Ascending aorta (tissue), 2 donors: ENCODE measurements at regions of chr5 and their contacts with region 1.

Region 1: GRCh38 chr5:180810210-180810958 is 7.8 kb upstream of the MGAT1 start:
- DNase-seq: peak; percentile 79 to 96
- H3K4me3 ChIP-seq: peak overlapping the region; percentile 70 to 76
- H3K27ac ChIP-seq: peak overlapping the region; percentile 93 to 97
- H3K4me1 ChIP-seq: peaks cover 14 to 40% of the 10 kb centered on the region in 2 donors
- H3K27me3 ChIP-seq: no peaks in the 10 kb centered on the region
- CTCF ChIP-seq: no peak

Region 2: DNA sequence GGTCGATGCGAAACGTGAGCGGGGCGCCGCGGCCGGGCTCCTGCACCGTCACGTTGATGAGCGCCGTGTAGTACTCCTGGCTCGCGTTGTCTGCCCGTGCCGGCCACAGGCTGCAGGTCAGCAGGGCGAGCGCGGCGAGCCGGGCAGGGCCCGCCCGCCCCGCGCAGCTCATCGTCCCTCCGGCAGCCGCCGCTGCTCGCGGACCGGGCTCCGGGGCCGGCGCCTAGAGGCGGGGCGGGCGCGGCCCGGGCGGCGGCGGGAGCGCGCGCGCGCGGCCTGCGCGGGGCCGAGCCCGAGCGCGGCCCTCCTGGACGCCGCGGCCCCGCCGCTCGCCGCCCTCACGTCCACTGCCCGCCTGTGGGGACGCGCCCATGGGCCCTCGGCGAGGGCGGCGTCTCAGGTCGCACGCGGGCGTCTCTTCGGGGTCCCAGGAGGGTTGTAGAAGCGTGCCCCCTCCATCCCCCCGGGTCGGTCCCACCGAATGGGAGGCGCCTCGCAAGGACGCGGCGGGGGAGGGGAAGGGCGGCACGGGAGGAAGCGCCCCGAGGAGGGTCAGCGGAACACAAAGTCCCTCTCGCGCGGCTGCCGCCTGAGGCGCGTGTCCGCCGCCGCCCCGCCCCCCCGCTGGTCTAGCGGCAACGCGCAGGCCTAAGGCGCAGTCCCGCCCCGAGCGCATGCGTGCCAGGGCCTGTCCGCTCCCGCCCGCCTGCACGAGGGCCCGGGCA is 738.7 kb before region 1 on chr5 and contains the start of gene RNF130:
- intact Hi-C with region 1: loop called (anchors 5 kb)
- DNase-seq: peak; percentile 72 to 95
- H3K4me3 ChIP-seq: peak within 1 kb of the TSS; percentile 74 to 94
- H3K27ac ChIP-seq: peak within 1 kb of the TSS; percentile 94 to 98
- H3K4me1 ChIP-seq: peaks cover 0 to 10% of the 10 kb centered on the region in 2 donors
- H3K27me3 ChIP-seq: no peaks in the 10 kb centered on the region
- CTCF ChIP-seq: no peak
- total RNA-seq, gene RNF130: 86.7 TPM

Region 3: GRCh38 chr5:180353048-180353979 is 457.1 kb before region 1 on chr5 and contains the start of gene GFPT2:
- intact Hi-C with region 1: loop called (anchors 10 kb)
- DNase-seq: peak; percentile 35 to 91
- H3K4me3 ChIP-seq: peak within 1 kb of the TSS; percentile 83 to 88
- H3K27ac ChIP-seq: peak within 1 kb of the TSS; percentile 51 to 62
- H3K4me1 ChIP-seq: peaks cover 0 to 3% of the 10 kb centered on the region in 2 donors
- H3K27me3 ChIP-seq: no peaks in the 10 kb centered on the region
- CTCF ChIP-seq: no peak
- total RNA-seq, gene GFPT2: 25.2 TPM

Region 4: DNA sequence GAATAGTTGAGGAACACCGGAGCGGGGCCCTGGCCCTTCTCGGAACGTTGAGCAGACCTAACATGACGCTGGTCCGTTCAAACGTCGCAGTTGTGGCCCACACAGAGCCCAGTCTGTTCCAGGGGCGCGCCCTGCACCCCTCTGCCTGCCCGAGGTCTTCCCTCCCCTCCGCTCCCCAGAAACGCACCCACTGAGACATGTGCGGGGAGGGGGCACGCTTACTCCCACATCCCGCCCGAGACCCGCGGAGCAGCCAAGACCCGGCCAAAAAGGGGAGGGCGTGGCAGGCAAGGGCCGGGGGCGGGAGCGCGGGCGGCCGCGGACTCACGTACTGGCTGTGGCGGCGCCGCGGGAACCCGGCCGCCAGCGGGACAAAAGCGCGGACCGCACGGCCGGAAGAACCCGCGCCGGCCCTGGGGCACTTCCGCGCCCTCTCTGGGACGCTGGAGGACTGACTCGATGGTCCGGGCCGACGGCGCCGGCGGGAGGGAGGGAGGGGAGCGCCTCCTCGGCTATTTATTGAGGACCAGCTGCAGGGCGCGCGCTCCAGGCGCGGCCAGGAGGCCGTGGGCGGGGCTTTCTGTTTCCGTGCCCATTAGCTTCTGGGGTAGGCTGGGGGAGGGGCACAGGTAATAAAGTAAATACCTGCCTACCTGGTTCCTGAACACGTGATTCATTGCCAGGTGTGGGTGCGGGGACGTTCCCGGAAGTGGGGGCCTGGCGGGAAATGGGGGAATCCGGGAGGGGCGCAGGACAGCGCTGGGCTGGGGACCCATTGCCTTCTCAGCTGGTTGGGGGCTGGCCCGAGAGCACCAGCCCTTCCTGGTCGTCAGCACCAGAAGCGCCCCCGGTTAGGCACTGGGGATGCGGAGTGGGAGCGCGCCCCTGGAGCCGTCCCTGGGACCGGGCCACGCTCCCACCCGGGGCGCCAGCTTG is 50.8 kb after region 1 on chr5 and contains the start of gene ZFP62:
- intact Hi-C with region 1: loop called (anchors 2 kb)
- DNase-seq: peak; percentile 59 to 95
- H3K4me3 ChIP-seq: peak within 1 kb of the TSS; percentile 82 to 83
- H3K27ac ChIP-seq: peak within 1 kb of the TSS; percentile 69 to 80
- H3K4me1 ChIP-seq: peaks cover 0 to 3% of the 10 kb centered on the region in 2 donors
- H3K27me3 ChIP-seq: no peaks in the 10 kb centered on the region
- CTCF ChIP-seq: peak in 1 of 3 experiments; percentile 9
- total RNA-seq, gene ZFP62: 1.8 TPM

Region 5: GRCh38 chr5:181243512-181244343 is 433.3 kb after region 1 on chr5 and contains the start of gene RACK1:
- intact Hi-C with region 1: loop called (anchors 5 kb)
- DNase-seq: peak in 1 of 2 donors; percentile 94
- H3K4me3 ChIP-seq: peak within 1 kb of the TSS; percentile 86 to 91
- H3K27ac ChIP-seq: peak within 1 kb of the TSS; percentile 98 to 99
- H3K4me1 ChIP-seq: peaks cover 31 to 48% of the 10 kb centered on the region in 2 donors
- H3K27me3 ChIP-seq: no peaks in the 10 kb centered on the region
- CTCF ChIP-seq: no peak
- total RNA-seq, gene RACK1: 2,870 TPM